ENCODE measurements at regions of chr9 and their contacts with region 1.

Region 1: GRCh38 chr9:70609542-70610286 is 195.3 kb upstream of the KLF9 start:
- DNase-seq: no peak
- ATAC-seq: no peak
- H3K4me3 ChIP-seq: no peak overlapping the region
- H3K27ac ChIP-seq: no peak overlapping the region
- H3K4me1 ChIP-seq: no peaks in the 10 kb centered on the region
- H3K27me3 ChIP-seq: no peaks in the 10 kb centered on the region
- CTCF ChIP-seq: no peak
- POLR2A ChIP-seq: no peak

Region 2: DNA sequence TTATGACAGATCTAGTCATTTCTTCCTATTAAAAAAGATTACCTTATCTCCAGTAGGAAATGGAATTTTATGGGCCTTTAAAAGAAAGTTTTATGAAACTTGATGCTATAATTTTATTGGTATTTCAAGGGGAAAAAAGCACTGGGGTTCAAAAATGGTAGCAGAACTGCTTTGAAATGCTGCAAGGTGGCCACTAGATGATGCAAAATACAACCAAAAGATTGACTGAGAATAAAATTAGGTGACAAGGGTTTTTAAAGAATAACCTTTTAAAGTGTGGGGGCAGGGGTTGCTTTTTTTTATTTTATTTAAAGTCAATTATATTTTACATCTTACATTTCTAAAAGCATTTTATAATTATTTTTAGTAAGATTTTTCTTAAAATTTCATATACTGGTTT is 256.9 kb before region 1 on chr9:
- intact Hi-C with region 1: loop called in 1 of 2 experiments (anchors 5 kb)
- DNase-seq: no peak
- ATAC-seq: peak; percentile 50 to 66 (median 53)
- H3K4me3 ChIP-seq: no peak overlapping the region
- H3K27ac ChIP-seq: no peak overlapping the region
- H3K4me1 ChIP-seq: no peaks in the 10 kb centered on the region
- H3K27me3 ChIP-seq: no peaks in the 10 kb centered on the region
- CTCF ChIP-seq: peak; percentile 55 to 65 (median 59)
- POLR2A ChIP-seq: no peak

Region 3: DNA sequence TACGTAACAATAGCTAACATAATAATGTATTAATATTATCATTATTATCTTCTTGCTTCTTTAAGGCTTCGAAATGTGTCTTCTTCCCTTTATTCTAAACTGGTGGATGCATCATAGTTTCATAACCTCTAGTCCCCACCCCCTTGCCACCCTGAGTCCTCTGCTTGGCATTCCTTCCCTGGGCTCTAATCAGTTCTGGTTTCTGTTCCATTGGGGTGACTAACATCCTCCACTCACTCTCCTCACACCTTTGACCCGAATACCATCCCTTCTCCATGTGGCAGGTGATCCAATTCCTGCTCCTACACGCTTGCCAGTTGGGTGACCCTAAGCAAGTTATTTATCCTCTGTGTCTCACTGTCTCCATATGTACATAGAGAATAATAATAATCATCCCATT is 225.6 kb after region 1 on chr9:
- intact Hi-C with region 1: no loop called
- DNase-seq: no peak
- ATAC-seq: no peak
- H3K4me3 ChIP-seq: no peak overlapping the region
- H3K27ac ChIP-seq: no peak overlapping the region
- H3K4me1 ChIP-seq: no peaks in the 10 kb centered on the region
- H3K27me3 ChIP-seq: no peaks in the 10 kb centered on the region
- CTCF ChIP-seq: no peak
- POLR2A ChIP-seq: no peak